ENCODE measurements at regions of chr14 and their contacts with region 1.

Region 1: GRCh38 chr14:89618811-89619551 is 201.9 kb upstream of the FOXN3 start:
- DNase-seq: peak in 9 of 10 donors; percentile 37 to 81 (median 54)
- H3K4me3 ChIP-seq: peak overlapping the region; percentile 55 to 87 (median 76)
- H3K27ac ChIP-seq: peak overlapping the region in 52 of 59 donors; percentile 16 to 88 (median 77)
- H3K27me3 ChIP-seq: no peaks in the 10 kb centered on the region
- CTCF ChIP-seq: peak in 4 of 56 donors; percentile 8 to 28 (median 12)

Region 2: GRCh38 chr14:89198544-89199329 is 420.2 kb before region 1 on chr14:
- intact Hi-C with region 1: no loop called
- DNase-seq: no peak
- H3K4me3 ChIP-seq: no peak overlapping the region
- H3K27ac ChIP-seq: peak overlapping the region in 1 of 59 donors; percentile 55
- H3K27me3 ChIP-seq: no peaks in the 10 kb centered on the region
- CTCF ChIP-seq: no peak

Region 3: GRCh38 chr14:89549381-89550125 is 69.4 kb before region 1 on chr14:
- intact Hi-C with region 1: loop called in 1 of 2 experiments (anchors 5 kb)
- DNase-seq: no peak
- H3K4me3 ChIP-seq: peak overlapping the region in 5 of 59 donors; percentile 5 to 46 (median 22)
- H3K27ac ChIP-seq: peak overlapping the region in 13 of 59 donors; percentile 2 to 57 (median 23)
- H3K27me3 ChIP-seq: no peaks in the 10 kb centered on the region
- CTCF ChIP-seq: no peak

Region 4: GRCh38 chr14:89564286-89564957 is 54.6 kb before region 1 on chr14:
- intact Hi-C with region 1: no loop called
- DNase-seq: no peak
- H3K4me3 ChIP-seq: no peak overlapping the region
- H3K27ac ChIP-seq: no peak overlapping the region
- H3K27me3 ChIP-seq: no peaks in the 10 kb centered on the region
- CTCF ChIP-seq: no peak

Measured in dorsolateral prefrontal cortex (tissue), 120 donors.